HepG2 (cell line): ENCODE measurements at regions of chr6 and their contacts with region 1.

Region 1: DNA sequence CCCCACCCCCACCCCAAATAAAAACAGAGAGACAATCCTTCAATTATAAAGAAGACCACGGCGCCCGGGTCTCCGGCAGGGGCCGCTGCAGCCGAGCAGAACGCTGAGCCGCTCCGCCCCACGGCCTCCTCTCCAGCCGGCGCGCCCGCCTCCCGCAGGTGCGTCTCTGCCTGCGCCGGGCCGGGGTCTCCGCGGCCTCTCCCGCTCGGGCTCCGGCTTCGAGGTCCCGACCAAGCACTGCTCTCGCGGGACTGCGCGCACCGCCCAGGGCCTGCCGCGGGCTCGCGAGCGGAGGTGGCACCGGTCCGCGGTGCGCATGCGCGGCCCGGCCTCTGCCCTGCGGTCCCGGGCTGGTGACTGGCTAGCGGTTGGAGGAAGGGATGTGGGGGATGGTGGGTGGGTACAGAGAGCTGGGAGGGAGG is 241 bp upstream of the SIRT5 start:
- DNase-seq: peak; percentile 96
- ATAC-seq: peak; percentile 92
- H3K4me3 ChIP-seq: peak overlapping the region; percentile 87 to 94 (median 88)
- H3K27ac ChIP-seq: peak overlapping the region; percentile 99
- H3K4me1 ChIP-seq: peaks cover 40% of the 10 kb centered on the region
- H3K27me3 ChIP-seq: no peaks in the 10 kb centered on the region
- CTCF ChIP-seq: peak; percentile 45; the same call in 1 of the 2 replicates
- EP300 ChIP-seq: no peak; a peak in 1 of 4 replicates
- POLR2A ChIP-seq: peak in 1 of 2 experiments; percentile 84; a peak in 2 of 4 replicates
- RAD21 ChIP-seq: peak; percentile 85

Region 2: GRCh38 chr6:13336553-13336952 is 237.6 kb before region 1 on chr6:
- CTCF ChIA-PET with region 1: no interaction called
- POLR2A ChIA-PET with region 1: interaction called, 12 read pairs
- in situ Hi-C with region 1: no loop called
- intact Hi-C with region 1: loop called (anchors 1 kb)
- DNase-seq: peak; percentile 69
- ATAC-seq: peak; percentile 77
- H3K4me3 ChIP-seq: no peak overlapping the region
- H3K27ac ChIP-seq: no peak overlapping the region
- H3K4me1 ChIP-seq: peaks cover 14% of the 10 kb centered on the region
- H3K27me3 ChIP-seq: peaks cover 0 to 8% of the 10 kb centered on the region in 2 experiments; a peak in 3 of 5 replicates
- CTCF ChIP-seq: peak; percentile 96
- EP300 ChIP-seq: no peak
- POLR2A ChIP-seq: no peak
- RAD21 ChIP-seq: peak; percentile 95

Region 3: DNA sequence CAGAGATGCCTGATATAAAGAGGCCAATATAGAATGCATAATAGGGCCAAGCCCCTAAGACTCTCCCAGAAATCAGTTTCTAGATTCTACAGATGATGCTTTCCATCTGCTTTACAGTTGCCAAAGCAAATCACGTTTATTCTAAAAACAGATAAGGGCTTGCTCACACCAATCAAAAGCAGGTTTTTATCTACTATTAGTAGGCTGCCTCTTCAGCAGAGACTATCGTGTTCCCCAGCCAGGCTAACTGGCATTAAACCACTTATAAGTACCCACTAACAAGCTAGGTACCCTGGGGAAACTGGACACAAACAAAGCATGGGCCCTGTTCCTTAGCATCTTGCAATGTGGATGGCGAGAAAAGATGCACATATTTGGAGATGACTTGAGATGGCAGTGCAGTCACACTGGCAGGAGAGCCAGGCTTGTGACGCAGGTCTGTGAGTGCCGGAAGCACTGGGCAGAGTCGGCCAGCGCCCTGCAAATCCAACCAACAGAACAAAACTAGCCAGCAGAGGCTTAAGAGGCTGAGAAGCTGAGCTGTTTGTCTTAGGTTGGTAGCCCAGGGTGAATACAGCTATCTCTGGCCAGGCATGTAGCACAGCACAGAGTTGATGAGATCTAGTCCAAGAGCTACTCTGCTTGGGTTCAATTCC is 160.1 kb before region 1 on chr6:
- CTCF ChIA-PET with region 1: no interaction called
- POLR2A ChIA-PET with region 1: interaction called, 13 read pairs
- in situ Hi-C with region 1: no loop called
- intact Hi-C with region 1: no loop called
- DNase-seq: no peak
- ATAC-seq: no peak; the same call in 2 of the 3 replicates
- H3K4me3 ChIP-seq: peak overlapping the region in 1 of 3 experiments; percentile 45; a peak in 1 of 6 replicates
- H3K27ac ChIP-seq: peak overlapping the region; percentile 58
- H3K4me1 ChIP-seq: peaks cover 80% of the 10 kb centered on the region
- H3K27me3 ChIP-seq: no peaks in the 10 kb centered on the region
- CTCF ChIP-seq: no peak
- EP300 ChIP-seq: no peak; a peak in 1 of 4 replicates
- POLR2A ChIP-seq: no peak
- RAD21 ChIP-seq: no peak

Region 4: DNA sequence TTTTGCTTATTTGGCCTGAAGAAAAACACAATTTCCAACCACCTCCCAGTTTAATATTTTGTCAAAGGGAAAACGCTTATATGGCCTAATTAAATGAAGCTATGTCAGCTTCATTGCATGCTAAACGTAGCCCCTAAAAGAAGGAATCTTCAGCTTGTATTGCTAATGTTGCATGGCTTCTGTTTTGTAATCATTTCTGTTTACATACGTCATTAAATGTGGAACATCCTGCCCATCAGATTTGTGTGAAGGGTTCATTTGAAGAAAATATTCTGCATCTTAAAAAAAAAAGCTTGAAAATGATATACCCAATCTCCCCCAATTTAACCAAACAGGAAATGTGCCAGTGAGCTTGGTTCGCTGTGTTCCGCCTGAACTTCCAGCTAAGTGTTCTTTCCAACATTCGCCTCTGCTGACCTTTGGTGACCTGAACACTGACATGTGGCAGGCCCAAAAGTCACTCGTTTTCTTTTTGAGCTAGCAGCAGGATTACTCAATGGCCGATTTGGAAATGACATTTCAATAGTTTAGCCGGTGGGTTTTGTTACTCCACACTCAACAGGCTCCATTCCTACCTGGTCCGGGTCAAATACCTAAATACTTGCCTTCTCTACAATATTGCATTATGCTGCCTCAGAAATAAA is 12.4 kb before region 1 on chr6:
- CTCF ChIA-PET with region 1: no interaction called
- POLR2A ChIA-PET with region 1: interaction called, 62 read pairs
- in situ Hi-C with region 1: no loop called
- intact Hi-C with region 1: no loop called
- DNase-seq: peak; percentile 80
- ATAC-seq: peak; percentile 78
- H3K4me3 ChIP-seq: peak overlapping the region in 2 of 3 experiments; percentile 15 to 17; a peak in 3 of 6 replicates
- H3K27ac ChIP-seq: peak overlapping the region; percentile 64
- H3K4me1 ChIP-seq: peaks cover 53% of the 10 kb centered on the region
- H3K27me3 ChIP-seq: no peaks in the 10 kb centered on the region; a peak in 1 of 5 replicates
- CTCF ChIP-seq: no peak
- EP300 ChIP-seq: peak in 1 of 2 experiments; percentile 75; a peak in 1 of 4 replicates
- POLR2A ChIP-seq: no peak
- RAD21 ChIP-seq: no peak

Region 5: GRCh38 chr6:13604546-13605416 is 30.6 kb after region 1 on chr6:
- CTCF ChIA-PET with region 1: interaction called, 7 read pairs
- POLR2A ChIA-PET with region 1: interaction called, 116 read pairs
- in situ Hi-C with region 1: no loop called
- intact Hi-C with region 1: loop called (anchors 1 kb)
- DNase-seq: peak; percentile 100
- ATAC-seq: peak; percentile 94
- H3K4me3 ChIP-seq: peak overlapping the region in 2 of 3 experiments; percentile 32 to 46; a peak in 2 of 6 replicates
- H3K27ac ChIP-seq: peak overlapping the region; percentile 87
- H3K4me1 ChIP-seq: peaks cover 44% of the 10 kb centered on the region
- H3K27me3 ChIP-seq: no peaks in the 10 kb centered on the region
- CTCF ChIP-seq: no peak
- EP300 ChIP-seq: peak; percentile 97 to 99
- POLR2A ChIP-seq: peak in 1 of 2 experiments; percentile 46; a peak in 1 of 4 replicates
- RAD21 ChIP-seq: peak; percentile 9; the same call in 1 of the 2 replicates

Region 6: GRCh38 chr6:13624871-13625288 is 50.7 kb after region 1 on chr6:
- CTCF ChIA-PET with region 1: no interaction called
- POLR2A ChIA-PET with region 1: interaction called, 12 read pairs
- in situ Hi-C with region 1: no loop called
- intact Hi-C with region 1: no loop called
- DNase-seq: peak; percentile 65
- ATAC-seq: peak; percentile 90
- H3K4me3 ChIP-seq: no peak overlapping the region
- H3K27ac ChIP-seq: no peak overlapping the region
- H3K4me1 ChIP-seq: peaks cover 5% of the 10 kb centered on the region; the same call in 1 of the 2 replicates
- H3K27me3 ChIP-seq: no peaks in the 10 kb centered on the region
- CTCF ChIP-seq: peak; percentile 74
- EP300 ChIP-seq: no peak
- POLR2A ChIP-seq: no peak
- RAD21 ChIP-seq: no peak; the same call in 1 of the 2 replicates

Region 7: DNA sequence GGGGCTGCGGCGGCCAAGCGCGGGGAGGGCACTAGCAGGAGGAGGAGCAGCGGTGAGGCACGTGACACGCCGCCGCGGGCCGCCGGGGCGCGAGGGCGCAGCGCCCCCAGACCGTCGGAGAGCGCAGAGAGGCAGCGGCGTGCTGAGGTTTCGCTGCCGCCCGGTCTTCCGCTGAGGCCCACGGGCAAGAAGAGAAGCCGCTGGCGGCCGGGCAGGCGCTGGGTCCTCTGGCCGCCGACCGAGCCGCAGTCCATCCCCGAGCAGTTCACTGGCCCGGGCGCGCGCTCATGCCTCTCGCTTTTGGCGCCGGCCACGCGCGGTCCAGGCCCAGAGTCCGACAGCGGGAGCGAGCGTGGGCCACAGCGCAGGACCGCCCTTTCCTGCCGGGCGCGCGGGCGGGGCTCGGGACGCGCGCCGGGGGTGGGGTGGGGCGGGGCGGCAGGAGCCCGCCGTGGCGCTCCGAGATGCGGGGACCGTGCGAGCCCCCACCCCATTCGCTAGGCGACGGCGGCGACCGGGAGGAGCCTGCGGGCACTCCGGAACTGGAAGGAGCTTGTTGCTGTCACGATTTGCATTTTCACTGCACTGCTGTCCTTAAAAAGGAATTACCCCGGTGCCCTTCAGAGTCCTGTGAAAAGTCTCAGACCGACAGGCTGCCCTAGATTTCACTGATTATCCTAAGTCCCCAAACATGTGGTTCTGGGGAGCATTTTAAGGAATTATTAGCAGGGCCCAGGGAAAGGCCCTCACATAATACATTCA is 240.2 kb after region 1 on chr6 and contains the start of gene MCUR1:
- CTCF ChIA-PET with region 1: no interaction called
- POLR2A ChIA-PET with region 1: interaction called, 10 read pairs
- in situ Hi-C with region 1: no loop called
- intact Hi-C with region 1: loop called (anchors 5 kb)
- DNase-seq: peak; percentile 77
- ATAC-seq: peak; percentile 86
- H3K4me3 ChIP-seq: peak within 1 kb of the TSS; percentile 74 to 92 (median 84)
- H3K27ac ChIP-seq: peak within 1 kb of the TSS; percentile 94
- H3K4me1 ChIP-seq: peaks cover 54% of the 10 kb centered on the region
- H3K27me3 ChIP-seq: no peaks in the 10 kb centered on the region
- CTCF ChIP-seq: peak; percentile 66
- EP300 ChIP-seq: no peak
- POLR2A ChIP-seq: peak; percentile 87 to 89
- RAD21 ChIP-seq: peak; percentile 66
- total RNA-seq, gene MCUR1: 27.6 and 29.6 TPM in 2 replicates

Region 8: GRCh38 chr6:15137086-15137485 is 1562.9 kb after region 1 on chr6:
- CTCF ChIA-PET with region 1: no interaction called
- POLR2A ChIA-PET with region 1: no interaction called
- in situ Hi-C with region 1: no loop called
- intact Hi-C with region 1: no loop called
- DNase-seq: no peak
- ATAC-seq: no peak
- H3K4me3 ChIP-seq: no peak overlapping the region
- H3K27ac ChIP-seq: no peak overlapping the region
- H3K4me1 ChIP-seq: peaks cover 13% of the 10 kb centered on the region
- H3K27me3 ChIP-seq: no peaks in the 10 kb centered on the region
- CTCF ChIP-seq: no peak
- EP300 ChIP-seq: no peak
- POLR2A ChIP-seq: no peak
- RAD21 ChIP-seq: no peak

Region 9: GRCh38 chr6:15534966-15535365 is 1960.8 kb after region 1 on chr6:
- CTCF ChIA-PET with region 1: no interaction called
- POLR2A ChIA-PET with region 1: no interaction called
- in situ Hi-C with region 1: no loop called
- intact Hi-C with region 1: no loop called
- DNase-seq: no peak
- ATAC-seq: no peak
- H3K4me3 ChIP-seq: no peak overlapping the region
- H3K27ac ChIP-seq: no peak overlapping the region
- H3K4me1 ChIP-seq: peaks cover 12% of the 10 kb centered on the region
- H3K27me3 ChIP-seq: no peaks in the 10 kb centered on the region
- CTCF ChIP-seq: no peak
- EP300 ChIP-seq: no peak
- POLR2A ChIP-seq: no peak
- RAD21 ChIP-seq: no peak